Mammary epithelial cell (primary cell): ENCODE measurements at regions of chr6 and their contacts with region 1.

Region 1: DNA sequence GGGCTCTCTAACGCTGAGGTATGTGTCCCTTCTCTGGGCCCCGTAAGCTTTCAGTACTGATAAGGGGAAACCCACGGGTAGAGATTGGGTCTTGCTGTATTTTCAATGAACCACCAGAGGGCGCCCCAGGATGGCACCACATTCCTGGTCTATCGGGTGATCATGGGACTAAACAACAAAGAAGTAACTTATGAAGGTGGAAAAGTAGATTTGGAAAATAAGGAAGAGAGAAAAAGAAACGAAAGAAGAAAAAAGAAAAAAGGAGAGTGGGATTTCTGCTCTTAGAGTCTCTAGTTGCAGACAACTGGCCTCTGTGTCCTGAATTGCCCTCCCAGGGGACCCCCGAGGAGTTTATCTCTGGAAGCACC is 93.8 kb downstream of the GMPR start:
- DNase-seq: peak; percentile 53
- H3K4me3 ChIP-seq: no peak overlapping the region
- H3K27ac ChIP-seq: no peak overlapping the region
- H3K4me1 ChIP-seq: peaks cover 52% of the 10 kb centered on the region
- H3K27me3 ChIP-seq: no peaks in the 10 kb centered on the region
- CTCF ChIP-seq: peak; percentile 80 to 95

Region 2: GRCh38 chr6:16216501-16217155 is 115.5 kb before region 1 on chr6:
- CTCF ChIA-PET with region 1: no interaction called
- dilution Hi-C with region 1: no loop called
- in situ Hi-C with region 1: no loop called
- intact Hi-C with region 1: no loop called
- DNase-seq: no peak
- H3K4me3 ChIP-seq: no peak overlapping the region
- H3K27ac ChIP-seq: no peak overlapping the region
- H3K4me1 ChIP-seq: no peaks in the 10 kb centered on the region
- H3K27me3 ChIP-seq: no peaks in the 10 kb centered on the region
- CTCF ChIP-seq: no peak

Region 3: GRCh38 chr6:16228709-16229665 is 103.2 kb before region 1 on chr6:
- CTCF ChIA-PET with region 1: no interaction called
- dilution Hi-C with region 1: no loop called
- in situ Hi-C with region 1: no loop called
- intact Hi-C with region 1: loop called (anchors 5 kb)
- DNase-seq: no peak
- H3K4me3 ChIP-seq: no peak overlapping the region
- H3K27ac ChIP-seq: no peak overlapping the region
- H3K4me1 ChIP-seq: no peaks in the 10 kb centered on the region
- H3K27me3 ChIP-seq: peaks cover 2% of the 10 kb centered on the region
- CTCF ChIP-seq: no peak

Region 4: GRCh38 chr6:16470502-16471221 is 138.5 kb after region 1 on chr6:
- CTCF ChIA-PET with region 1: interaction called, 15 read pairs
- dilution Hi-C with region 1: no loop called
- in situ Hi-C with region 1: no loop called
- intact Hi-C with region 1: no loop called
- DNase-seq: no peak
- H3K4me3 ChIP-seq: no peak overlapping the region
- H3K27ac ChIP-seq: no peak overlapping the region
- H3K4me1 ChIP-seq: no peaks in the 10 kb centered on the region
- H3K27me3 ChIP-seq: no peaks in the 10 kb centered on the region
- CTCF ChIP-seq: no peak

Region 5: GRCh38 chr6:16684896-16685554 is 352.9 kb after region 1 on chr6:
- CTCF ChIA-PET with region 1: no interaction called
- dilution Hi-C with region 1: no loop called
- in situ Hi-C with region 1: no loop called
- intact Hi-C with region 1: loop called (anchors 2 kb)
- DNase-seq: peak; percentile 97
- H3K4me3 ChIP-seq: no peak overlapping the region
- H3K27ac ChIP-seq: peak overlapping the region; percentile 91
- H3K4me1 ChIP-seq: peaks cover 63% of the 10 kb centered on the region
- H3K27me3 ChIP-seq: no peaks in the 10 kb centered on the region
- CTCF ChIP-seq: no peak

Region 6: DNA sequence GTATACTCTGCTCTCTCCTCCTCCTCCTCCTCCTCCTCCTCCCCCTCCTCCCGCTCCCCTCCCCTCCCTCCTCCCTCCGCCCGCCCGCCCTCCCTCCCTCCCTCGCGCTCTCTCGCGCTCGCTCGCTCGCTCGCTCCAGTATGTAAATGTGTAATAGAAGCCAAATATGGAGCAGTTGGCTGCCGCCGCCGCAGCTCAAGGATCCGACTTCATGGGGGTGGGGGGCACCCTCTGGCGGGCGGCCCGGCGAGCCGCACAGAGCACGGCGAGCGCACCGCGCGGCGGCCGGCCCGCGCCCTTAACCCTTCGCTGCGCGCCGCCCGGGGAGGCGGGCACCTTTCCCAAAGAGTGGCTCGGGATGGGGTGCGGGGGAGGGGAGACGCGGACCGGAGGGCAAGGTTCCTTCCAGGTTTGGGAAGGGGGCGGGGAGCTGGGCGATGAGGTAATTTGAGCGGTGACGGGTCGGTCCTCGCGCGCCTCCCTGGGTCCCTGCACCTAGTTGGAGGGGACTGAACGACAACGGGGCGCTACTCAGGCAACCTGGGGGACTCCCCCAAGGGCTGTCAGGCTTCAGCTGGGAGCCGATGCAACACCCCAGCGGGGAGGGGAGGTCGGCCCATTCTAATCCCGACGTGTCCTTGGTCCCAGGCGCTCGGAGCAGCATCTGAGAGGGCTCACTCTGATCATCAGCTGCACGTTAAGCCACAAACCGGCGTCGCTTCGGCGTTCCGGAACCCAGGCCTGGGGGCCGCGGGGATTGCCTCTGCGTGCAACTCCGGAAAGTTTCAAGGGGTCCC is 429.5 kb after region 1 on chr6:
- CTCF ChIA-PET with region 1: interaction called, 4 read pairs
- dilution Hi-C with region 1: no loop called
- in situ Hi-C with region 1: loop called (anchors 5 to 10 kb)
- intact Hi-C with region 1: loop called (anchors 1 kb)
- DNase-seq: peak; percentile 80
- H3K4me3 ChIP-seq: peak overlapping the region; percentile 54 to 80 (median 74)
- H3K27ac ChIP-seq: peak overlapping the region; percentile 83
- H3K4me1 ChIP-seq: peaks cover 35% of the 10 kb centered on the region
- H3K27me3 ChIP-seq: no peaks in the 10 kb centered on the region
- CTCF ChIP-seq: peak in 1 of 2 donors; percentile 35

Region 7: GRCh38 chr6:17057322-17057721 is 725.2 kb after region 1 on chr6:
- CTCF ChIA-PET with region 1: no interaction called
- dilution Hi-C with region 1: no loop called
- in situ Hi-C with region 1: loop called in 1 of 2 experiments (anchors 25 kb)
- intact Hi-C with region 1: no loop called
- DNase-seq: peak; percentile 80
- H3K4me3 ChIP-seq: no peak overlapping the region
- H3K27ac ChIP-seq: peak overlapping the region; percentile 31
- H3K4me1 ChIP-seq: peaks cover 33% of the 10 kb centered on the region
- H3K27me3 ChIP-seq: no peaks in the 10 kb centered on the region
- CTCF ChIP-seq: no peak